ENCODE measurements at regions of chr10 and their contacts with region 1.

Region 1: GRCh38 chr10:33008499-33009243 is 50.6 kb upstream of the ITGB1 start:
- DNase-seq: peak; percentile 81
- H3K4me3 Mint-ChIP-seq: peak overlapping the region; percentile 52
- H3K27ac Mint-ChIP-seq: peak overlapping the region; percentile 9
- H3K4me1 Mint-ChIP-seq: peaks cover 34% of the 10 kb centered on the region
- H3K27me3 Mint-ChIP-seq: peaks cover 9% of the 10 kb centered on the region

Region 2: DNA sequence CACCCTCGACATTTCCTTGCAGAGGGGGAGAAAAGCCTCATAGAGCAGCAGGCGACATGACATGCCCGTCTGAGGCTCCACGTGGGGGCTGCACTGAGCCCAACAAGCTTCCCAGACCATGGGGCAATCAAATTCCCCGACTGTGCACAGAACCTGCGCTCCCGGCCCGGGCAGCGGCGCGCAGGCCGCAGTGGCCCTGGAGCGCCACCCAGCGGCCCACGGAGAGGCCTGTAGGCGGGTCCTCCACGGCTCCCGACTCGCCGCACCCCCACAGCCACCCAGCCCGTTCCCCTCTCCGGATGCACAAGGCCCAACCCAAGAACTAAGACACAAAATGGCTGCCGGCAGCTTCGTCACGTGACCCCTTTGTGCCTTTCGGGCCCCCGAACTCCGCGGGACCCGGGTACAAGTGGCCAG is 662.5 kb before region 1 on chr10:
- CTCF ChIA-PET with region 1: no interaction called
- intact Hi-C with region 1: loop called (anchors 1 kb)
- DNase-seq: peak; percentile 97
- H3K4me3 Mint-ChIP-seq: peak overlapping the region; percentile 89
- H3K27ac Mint-ChIP-seq: peak overlapping the region; percentile 99
- H3K4me1 Mint-ChIP-seq: peaks cover 65% of the 10 kb centered on the region
- H3K27me3 Mint-ChIP-seq: no peaks in the 10 kb centered on the region

Region 3: DNA sequence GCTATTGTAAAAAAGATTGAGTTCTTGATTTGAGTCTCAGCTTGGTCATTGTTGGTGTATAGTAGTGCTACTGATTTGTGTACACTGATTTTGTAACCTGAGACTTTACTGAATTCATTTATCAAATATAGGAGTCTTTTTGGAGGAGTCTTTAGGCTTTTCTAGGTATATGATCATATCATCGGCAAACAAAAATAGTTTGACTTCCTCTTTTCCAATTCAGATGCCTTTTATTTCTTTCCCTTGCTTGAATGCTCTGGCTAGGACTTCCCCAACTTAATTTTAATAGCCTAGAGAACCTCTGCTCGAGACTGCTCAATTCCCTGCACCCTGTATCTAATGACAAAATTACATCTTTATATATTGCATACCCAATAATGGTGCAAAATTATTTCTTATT is 408.4 kb before region 1 on chr10:
- CTCF ChIA-PET with region 1: no interaction called
- intact Hi-C with region 1: no loop called
- DNase-seq: no peak
- H3K4me3 Mint-ChIP-seq: no peak overlapping the region
- H3K27ac Mint-ChIP-seq: no peak overlapping the region
- H3K4me1 Mint-ChIP-seq: no peaks in the 10 kb centered on the region
- H3K27me3 Mint-ChIP-seq: no peaks in the 10 kb centered on the region

Region 4: GRCh38 chr10:32731527-32731926 is 277.1 kb before region 1 on chr10:
- CTCF ChIA-PET with region 1: no interaction called
- intact Hi-C with region 1: loop called (anchors 5 kb)
- DNase-seq: no peak
- H3K4me3 Mint-ChIP-seq: no peak overlapping the region
- H3K27ac Mint-ChIP-seq: no peak overlapping the region
- H3K4me1 Mint-ChIP-seq: no peaks in the 10 kb centered on the region
- H3K27me3 Mint-ChIP-seq: no peaks in the 10 kb centered on the region

Region 5: GRCh38 chr10:32958085-32959005 is 50.3 kb before region 1 on chr10 and contains the start of gene ITGB1:
- CTCF ChIA-PET with region 1: interaction called, 3 read pairs
- intact Hi-C with region 1: loop called (anchors 1 kb)
- DNase-seq: peak; percentile 84
- H3K4me3 Mint-ChIP-seq: peak within 1 kb of the TSS; percentile 84
- H3K27ac Mint-ChIP-seq: peak within 1 kb of the TSS; percentile 89
- H3K4me1 Mint-ChIP-seq: peaks cover 40% of the 10 kb centered on the region
- H3K27me3 Mint-ChIP-seq: peaks cover 10% of the 10 kb centered on the region
- total RNA-seq, gene ITGB1: 30.3 to 34.5 TPM

Region 6: DNA sequence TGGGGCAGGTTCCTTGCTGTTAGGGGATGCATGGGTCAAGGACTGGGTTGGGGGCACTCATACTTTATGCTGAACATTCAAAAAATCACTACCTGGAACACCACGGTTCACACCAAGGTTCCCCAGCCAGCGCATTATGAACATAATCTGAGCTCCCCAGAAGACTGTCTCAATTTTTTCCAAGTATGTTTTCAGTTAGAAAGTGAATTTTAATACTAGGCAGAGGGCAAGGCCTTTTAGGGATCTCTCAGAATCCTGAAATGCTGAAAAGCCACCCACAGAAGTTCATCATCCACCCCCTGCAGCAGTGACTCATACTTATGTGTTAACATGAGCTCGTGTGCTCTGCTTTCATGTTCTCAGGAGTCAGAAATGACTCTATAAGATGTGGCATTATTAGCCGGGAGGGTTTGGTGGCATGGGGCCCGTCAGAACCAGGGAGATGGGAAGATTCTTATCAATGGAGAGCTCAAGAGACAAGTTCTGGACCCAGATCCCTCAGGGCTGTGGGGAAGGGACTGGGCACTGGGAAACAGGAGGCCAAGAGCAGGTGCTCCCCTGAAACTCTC is 134.6 kb after region 1 on chr10:
- CTCF ChIA-PET with region 1: no interaction called
- intact Hi-C with region 1: no loop called
- DNase-seq: peak; percentile 82
- H3K4me3 Mint-ChIP-seq: no peak overlapping the region
- H3K27ac Mint-ChIP-seq: peak overlapping the region; percentile 50
- H3K4me1 Mint-ChIP-seq: peaks cover 52% of the 10 kb centered on the region
- H3K27me3 Mint-ChIP-seq: no peaks in the 10 kb centered on the region

Region 7: GRCh38 chr10:33155720-33156638 is 147.3 kb after region 1 on chr10:
- CTCF ChIA-PET with region 1: interaction called, 18 read pairs
- intact Hi-C with region 1: loop called (anchors 1 kb)
- DNase-seq: peak; percentile 55
- H3K4me3 Mint-ChIP-seq: no peak overlapping the region
- H3K27ac Mint-ChIP-seq: no peak overlapping the region
- H3K4me1 Mint-ChIP-seq: peaks cover 35% of the 10 kb centered on the region
- H3K27me3 Mint-ChIP-seq: no peaks in the 10 kb centered on the region